ENCODE measurements at regions of chrX and their contacts with region 1.

Region 1: DNA sequence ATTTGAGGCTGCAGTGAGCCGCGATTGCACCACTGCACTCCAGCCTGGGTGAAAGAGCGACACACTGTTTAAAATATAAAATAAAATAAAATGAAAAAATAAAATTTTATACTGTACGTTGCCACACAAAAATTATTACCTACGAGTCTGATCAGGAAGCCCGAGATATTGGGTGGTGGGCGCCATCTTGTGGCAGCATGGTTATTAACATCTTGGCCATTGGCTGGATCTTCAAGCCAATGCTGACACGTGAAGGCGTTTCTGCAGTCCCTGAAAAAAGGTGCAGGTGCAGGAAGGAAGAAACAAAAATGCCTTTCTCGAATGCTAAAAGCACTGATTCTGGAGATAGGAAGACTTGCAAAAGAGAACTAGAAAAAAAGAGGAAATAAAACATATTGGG is 4.9 kb upstream of the TLR8 start:
- DNase-seq: peak; percentile 85
- H3K4me3 Mint-ChIP-seq: no peak overlapping the region
- H3K27ac Mint-ChIP-seq: no peak overlapping the region
- H3K4me1 Mint-ChIP-seq: peaks cover 8% of the 10 kb centered on the region
- H3K27me3 Mint-ChIP-seq: no peaks in the 10 kb centered on the region

Region 2: DNA sequence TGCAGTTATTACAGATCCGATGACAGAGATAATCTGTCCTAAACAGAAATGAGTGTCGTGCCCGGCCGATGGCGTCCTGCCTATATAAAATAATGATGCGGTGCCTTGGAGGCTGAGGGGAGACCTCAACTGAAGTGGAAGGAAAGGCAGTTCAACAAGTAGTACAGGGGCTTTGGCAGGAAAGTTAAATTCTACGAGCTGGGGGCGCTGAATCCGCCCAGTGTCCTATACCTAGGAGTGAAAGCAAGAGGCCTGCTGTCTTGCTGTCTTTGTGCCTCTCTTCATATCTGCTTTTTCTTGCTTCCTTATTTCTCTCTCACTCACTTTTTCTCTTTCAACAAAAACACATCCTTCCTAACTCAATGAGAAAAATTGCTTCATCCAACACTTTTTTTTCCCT is 192.4 kb before region 1 on chrX:
- CTCF ChIA-PET with region 1: interaction called, 3 read pairs
- intact Hi-C with region 1: loop called (anchors 1 kb)
- DNase-seq: peak; percentile 56
- H3K4me3 Mint-ChIP-seq: no peak overlapping the region
- H3K27ac Mint-ChIP-seq: no peak overlapping the region
- H3K4me1 Mint-ChIP-seq: no peaks in the 10 kb centered on the region
- H3K27me3 Mint-ChIP-seq: no peaks in the 10 kb centered on the region

Region 3: GRCh38 chrX:12814420-12814819 is 87.1 kb before region 1 on chrX:
- CTCF ChIA-PET with region 1: interaction called, 17 read pairs
- intact Hi-C with region 1: no loop called
- DNase-seq: peak; percentile 64
- H3K4me3 Mint-ChIP-seq: no peak overlapping the region
- H3K27ac Mint-ChIP-seq: no peak overlapping the region
- H3K4me1 Mint-ChIP-seq: peaks cover 5% of the 10 kb centered on the region
- H3K27me3 Mint-ChIP-seq: no peaks in the 10 kb centered on the region

Region 4: DNA sequence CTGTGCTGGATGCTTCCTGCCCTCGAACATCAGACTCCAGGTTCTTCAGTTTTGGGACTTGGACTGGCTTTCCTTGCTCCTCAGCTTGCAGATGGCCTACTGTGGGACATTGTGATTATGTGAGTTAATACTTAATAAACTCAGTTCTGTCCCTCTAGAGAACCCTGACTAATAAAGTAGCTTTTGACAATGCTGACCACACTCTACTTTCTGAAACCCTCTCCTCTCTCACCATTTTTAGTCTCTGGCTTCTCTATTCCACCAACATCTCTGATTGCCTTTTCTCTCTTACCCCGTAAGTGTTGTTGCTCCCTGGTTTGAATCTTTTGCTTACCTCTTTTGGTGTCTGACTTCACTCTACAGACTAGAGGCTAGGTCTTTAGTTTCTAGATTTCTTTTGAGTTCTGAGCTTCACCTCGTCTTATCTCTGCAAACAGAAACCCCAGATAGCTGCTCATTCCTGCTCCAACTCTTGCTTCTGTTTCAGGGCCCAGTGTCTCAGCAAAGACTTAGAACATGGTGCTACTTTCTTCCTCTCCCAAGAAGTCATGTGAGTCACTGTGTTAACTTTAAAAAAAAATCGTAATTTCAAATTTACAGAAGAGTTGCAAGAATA is 84.8 kb after region 1 on chrX:
- CTCF ChIA-PET with region 1: no interaction called
- intact Hi-C with region 1: no loop called
- DNase-seq: no peak
- H3K4me3 Mint-ChIP-seq: peak overlapping the region; percentile 54
- H3K27ac Mint-ChIP-seq: peak overlapping the region; percentile 95
- H3K4me1 Mint-ChIP-seq: peaks cover 78% of the 10 kb centered on the region
- H3K27me3 Mint-ChIP-seq: no peaks in the 10 kb centered on the region

Region 5: DNA sequence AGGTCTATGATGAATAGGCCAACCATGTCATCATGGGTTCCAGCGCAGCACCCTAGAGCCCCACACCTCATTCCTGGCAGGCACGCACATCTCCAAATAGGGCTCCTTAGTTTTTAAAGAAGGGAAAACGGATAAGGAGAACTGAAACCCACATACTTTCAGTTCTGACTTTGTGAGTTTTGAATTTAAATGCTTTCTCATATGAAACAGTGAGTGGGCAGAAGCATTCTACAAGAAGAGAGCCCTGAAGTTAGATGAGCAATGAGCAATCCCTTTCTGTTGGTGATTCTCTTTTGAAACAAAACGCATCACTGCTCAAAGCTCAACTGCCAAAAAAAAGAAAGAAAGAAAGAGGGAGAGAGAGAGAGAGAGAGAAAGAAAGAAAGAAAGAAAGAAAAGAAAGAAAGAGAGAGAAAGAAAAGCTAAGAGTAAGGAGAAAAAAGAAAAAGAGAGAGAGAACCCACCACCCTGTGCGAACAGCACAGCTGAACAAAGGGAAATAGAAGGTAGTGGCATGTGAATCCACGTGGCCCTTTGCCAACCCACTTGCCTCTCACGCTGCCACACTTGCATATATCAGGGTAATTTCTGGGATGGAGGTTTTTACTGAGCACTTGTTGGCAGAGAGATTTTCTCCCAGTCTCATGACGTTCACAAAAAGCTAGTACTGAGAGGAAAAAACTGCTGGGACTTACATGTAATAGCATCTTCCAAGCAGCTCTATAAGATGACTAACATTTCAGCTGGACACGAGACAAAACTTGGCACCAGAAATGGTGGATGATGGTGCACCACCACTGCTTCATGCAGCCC is 104.4 kb after region 1 on chrX:
- CTCF ChIA-PET with region 1: no interaction called
- intact Hi-C with region 1: no loop called
- DNase-seq: peak; percentile 39
- H3K4me3 Mint-ChIP-seq: peak overlapping the region; percentile 90
- H3K27ac Mint-ChIP-seq: peak overlapping the region; percentile 99
- H3K4me1 Mint-ChIP-seq: peaks cover 70% of the 10 kb centered on the region
- H3K27me3 Mint-ChIP-seq: no peaks in the 10 kb centered on the region

Region 6: DNA sequence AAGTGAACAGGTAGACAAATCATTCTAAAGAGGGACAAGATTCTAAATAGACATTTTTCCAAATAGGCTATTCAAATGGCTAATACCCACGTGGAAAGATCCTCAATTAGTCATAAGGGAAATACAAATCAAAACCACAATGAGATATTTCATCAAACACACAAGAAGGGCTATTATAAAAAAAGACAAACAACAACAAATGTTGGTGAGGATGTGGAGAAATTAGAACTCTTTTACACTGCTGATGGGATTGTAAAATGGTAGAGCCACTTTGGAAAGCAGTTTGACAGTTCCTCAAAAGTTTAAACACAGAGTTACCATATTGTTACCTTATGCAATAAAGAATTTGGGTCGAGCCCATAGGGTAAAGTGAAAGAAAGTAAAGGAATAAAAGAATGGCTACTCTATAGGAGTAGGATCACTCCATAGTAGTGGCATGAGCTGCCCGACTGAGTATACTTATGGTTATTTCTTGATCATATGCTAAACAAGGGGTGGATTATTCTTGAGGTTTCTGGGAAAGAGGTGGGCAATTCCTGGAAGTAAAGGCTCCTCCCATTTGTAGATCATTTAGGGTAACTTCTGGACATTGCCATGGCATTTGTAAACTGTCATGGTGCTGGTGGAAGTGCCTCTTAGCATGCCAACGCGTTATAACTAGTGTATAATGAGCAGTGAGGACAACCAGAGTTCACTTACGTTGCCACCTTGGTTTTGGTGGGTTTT is 201.9 kb after region 1 on chrX:
- CTCF ChIA-PET with region 1: no interaction called
- intact Hi-C with region 1: no loop called
- DNase-seq: no peak
- H3K4me3 Mint-ChIP-seq: no peak overlapping the region
- H3K27ac Mint-ChIP-seq: no peak overlapping the region
- H3K4me1 Mint-ChIP-seq: peaks cover 41% of the 10 kb centered on the region
- H3K27me3 Mint-ChIP-seq: no peaks in the 10 kb centered on the region